ENCODE measurements at regions of chr10 and their contacts with region 1.

Region 1: DNA sequence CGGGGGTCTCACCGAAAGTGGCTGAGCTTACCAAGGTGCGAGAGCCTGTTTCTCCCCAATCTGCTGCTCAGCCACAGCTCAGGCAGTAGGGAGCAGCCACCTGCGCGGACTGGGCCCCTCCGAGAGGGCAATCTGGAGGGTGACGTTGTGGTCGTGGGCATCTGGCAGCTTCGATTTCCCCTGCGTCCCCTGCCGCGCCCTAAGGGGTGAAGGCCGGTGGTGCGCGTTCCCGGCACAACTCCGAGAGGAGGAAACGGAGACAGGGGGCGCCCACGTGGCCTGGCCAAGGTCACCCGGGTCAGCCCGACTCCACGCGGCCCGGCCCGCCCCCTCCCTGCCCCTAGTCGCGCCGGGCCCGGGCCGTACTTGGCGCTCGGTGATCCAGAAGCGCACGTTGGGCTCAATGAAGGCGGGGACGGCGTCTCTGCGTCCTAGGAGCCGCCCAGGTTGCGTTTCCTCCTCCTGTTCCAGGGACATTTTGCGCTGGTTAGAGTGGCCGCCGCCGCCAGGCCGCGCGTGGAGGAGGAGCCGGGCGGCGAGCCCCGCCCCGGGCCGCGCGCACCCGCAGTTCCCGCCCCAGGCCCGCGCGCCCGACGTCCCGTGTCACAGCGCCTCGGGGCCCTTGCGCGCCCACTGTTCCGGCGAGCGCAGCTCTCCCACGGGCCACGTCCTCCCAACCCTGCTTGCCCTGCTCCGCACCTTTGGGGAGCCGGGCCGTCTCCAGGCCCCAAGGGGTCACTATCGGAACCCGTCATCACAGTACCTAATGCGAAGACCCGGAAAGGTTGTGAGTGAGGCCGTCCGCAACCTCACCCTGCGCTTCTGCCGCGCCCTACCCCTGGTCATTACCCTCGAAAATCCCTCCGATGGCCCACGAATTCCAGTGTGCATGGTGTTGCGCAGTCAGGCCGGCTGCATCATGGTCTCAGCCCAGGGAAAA is at the start of gene SFXN4:
- DNase-seq: peak; percentile 72 to 87 (median 84)
- ATAC-seq: peak; percentile 98
- H3K4me3 ChIP-seq: peak within 1 kb of the TSS; percentile 95
- H3K4me3 Mint-ChIP-seq: peak within 1 kb of the TSS; percentile 89 to 95 (median 92)
- H3K27ac ChIP-seq: peak within 1 kb of the TSS; percentile 88
- H3K27ac Mint-ChIP-seq: peak within 1 kb of the TSS; percentile 85 to 98 (median 95)
- H3K4me1 ChIP-seq: peaks cover 12 to 15% of the 10 kb centered on the region in 2 donors
- H3K4me1 Mint-ChIP-seq: peaks cover 22 to 39% (median 32%) of the 10 kb centered on the region in 7 donors
- H3K27me3 ChIP-seq: no peaks in the 10 kb centered on the region
- H3K27me3 Mint-ChIP-seq: no peaks in the 10 kb centered on the region
- total RNA-seq, gene SFXN4: 11.8 to 28.1 (median 23.1) TPM

Region 2: GRCh38 chr10:119028900-119029612 is 136.4 kb before region 1 on chr10:
- CTCF ChIA-PET with region 1: no interaction called
- POLR2A ChIA-PET with region 1: no interaction called
- intact Hi-C with region 1: loop called in 1 of 2 experiments (anchors 1 kb)
- DNase-seq: peak; percentile 50 to 81 (median 60)
- ATAC-seq: peak; percentile 85
- H3K4me3 ChIP-seq: peak overlapping the region; percentile 43
- H3K4me3 Mint-ChIP-seq: peak overlapping the region; percentile 59 to 87 (median 78)
- H3K27ac ChIP-seq: no peak overlapping the region
- H3K27ac Mint-ChIP-seq: peak overlapping the region in 3 of 9 donors; percentile 17 to 65 (median 55)
- H3K4me1 ChIP-seq: no peaks in the 10 kb centered on the region
- H3K4me1 Mint-ChIP-seq: peaks cover 6 to 24% (median 10%) of the 10 kb centered on the region in 7 donors
- H3K27me3 ChIP-seq: no peaks in the 10 kb centered on the region
- H3K27me3 Mint-ChIP-seq: peaks cover 0 to 12% (median 0%) of the 10 kb centered on the region in 5 donors

Region 3: DNA sequence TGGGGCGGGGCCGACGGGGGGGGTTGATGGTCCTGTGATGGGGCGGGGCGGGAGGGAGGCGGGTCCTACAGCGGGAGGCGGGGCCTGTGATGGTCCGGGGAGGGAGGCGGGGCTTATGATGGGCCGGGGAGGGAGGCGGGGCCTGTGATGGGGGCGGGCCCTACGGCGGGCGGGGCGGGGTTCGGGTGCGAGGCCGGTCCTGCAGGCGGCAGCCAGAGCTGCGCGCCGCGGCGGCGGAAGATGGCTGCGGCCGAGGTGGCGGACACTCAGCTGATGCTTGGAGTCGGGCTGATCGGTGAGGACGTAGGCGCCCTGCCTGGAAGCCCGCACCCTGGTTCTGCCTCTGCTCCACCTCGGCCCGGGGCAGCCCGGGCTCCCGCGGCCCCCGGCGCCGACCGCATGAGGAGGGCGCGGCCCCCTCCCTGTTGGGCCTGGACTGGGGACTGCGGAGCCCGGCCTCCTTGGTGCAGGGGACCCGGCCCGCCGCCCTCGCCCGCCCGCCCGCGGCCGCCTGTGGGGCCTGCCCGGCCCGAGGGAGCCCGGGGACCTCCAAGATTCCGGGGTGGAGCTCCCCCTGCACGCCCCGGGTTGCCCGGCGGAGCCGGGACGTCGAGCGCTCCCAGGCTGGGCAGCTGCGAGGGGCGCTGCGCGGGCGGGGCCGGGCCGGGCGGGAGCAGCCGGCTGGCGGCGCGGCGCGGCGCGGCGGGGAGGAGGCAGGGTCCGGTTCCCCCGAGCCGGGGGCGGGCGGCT is 61.4 kb before region 1 on chr10 and contains the start of gene DENND10:
- CTCF ChIA-PET with region 1: no interaction called
- POLR2A ChIA-PET with region 1: interaction called, 3 read pairs
- intact Hi-C with region 1: loop called (anchors 1 kb)
- DNase-seq: peak; percentile 18 to 80 (median 51)
- ATAC-seq: peak; percentile 93
- H3K4me3 ChIP-seq: peak within 1 kb of the TSS; percentile 45
- H3K4me3 Mint-ChIP-seq: peak within 1 kb of the TSS; percentile 65 to 94 (median 85)
- H3K27ac ChIP-seq: peak within 1 kb of the TSS; percentile 69
- H3K27ac Mint-ChIP-seq: peak within 1 kb of the TSS; percentile 62 to 96 (median 84)
- H3K4me1 ChIP-seq: peaks cover 6 to 20% of the 10 kb centered on the region in 2 donors
- H3K4me1 Mint-ChIP-seq: peaks cover 5 to 35% (median 14%) of the 10 kb centered on the region in 7 donors
- H3K27me3 ChIP-seq: no peaks in the 10 kb centered on the region
- H3K27me3 Mint-ChIP-seq: no peaks in the 10 kb centered on the region
- total RNA-seq, gene DENND10: 22.1 to 41.7 (median 28.8) TPM

Region 4: DNA sequence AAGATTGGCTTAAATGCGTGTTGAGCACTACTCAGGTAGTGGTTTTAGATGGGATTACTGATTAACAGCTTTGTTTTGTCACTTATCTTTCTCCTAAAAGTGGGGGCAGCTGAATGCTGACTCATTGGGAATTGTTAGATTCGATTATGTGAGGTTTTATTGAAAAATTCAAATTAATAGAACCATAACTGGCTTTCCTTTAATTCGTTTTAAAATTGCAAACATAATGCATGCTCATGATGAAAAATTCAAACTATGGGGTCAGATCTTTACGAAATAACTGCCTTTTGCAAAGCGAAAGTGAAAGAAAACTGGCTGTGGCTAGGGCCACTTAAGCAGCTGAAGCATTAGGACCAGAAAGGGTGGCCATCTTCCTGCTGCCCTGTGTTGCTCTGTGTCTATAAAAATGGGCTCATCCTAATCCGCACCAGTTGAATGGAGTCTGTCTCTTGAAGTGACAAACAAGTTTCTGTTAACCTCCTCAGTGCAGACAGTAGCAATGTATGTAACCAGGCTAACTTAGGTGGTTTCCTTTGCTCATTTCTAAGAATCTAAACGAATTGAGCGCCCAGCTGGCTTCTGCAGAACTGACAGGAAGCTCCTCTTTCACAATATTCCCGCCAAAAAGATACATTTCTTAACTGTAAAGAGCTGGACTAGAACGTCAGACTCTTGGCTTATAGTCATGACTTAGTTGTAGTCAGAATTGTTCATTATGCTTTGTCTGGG is 33.8 kb before region 1 on chr10:
- CTCF ChIA-PET with region 1: no interaction called
- POLR2A ChIA-PET with region 1: interaction called, 5 read pairs
- intact Hi-C with region 1: loop called (anchors 1 to 2 kb)
- DNase-seq: peak in 8 of 9 donors; percentile 24 to 61 (median 40)
- ATAC-seq: peak; percentile 77
- H3K4me3 ChIP-seq: peak overlapping the region; percentile 73
- H3K4me3 Mint-ChIP-seq: peak overlapping the region; percentile 81 to 96 (median 91)
- H3K27ac ChIP-seq: peak overlapping the region; percentile 66
- H3K27ac Mint-ChIP-seq: peak overlapping the region; percentile 92 to 97 (median 95)
- H3K4me1 ChIP-seq: peaks cover 8 to 16% of the 10 kb centered on the region in 2 donors
- H3K4me1 Mint-ChIP-seq: peaks cover 16 to 59% (median 32%) of the 10 kb centered on the region in 7 donors
- H3K27me3 ChIP-seq: no peaks in the 10 kb centered on the region
- H3K27me3 Mint-ChIP-seq: no peaks in the 10 kb centered on the region

Region 5: DNA sequence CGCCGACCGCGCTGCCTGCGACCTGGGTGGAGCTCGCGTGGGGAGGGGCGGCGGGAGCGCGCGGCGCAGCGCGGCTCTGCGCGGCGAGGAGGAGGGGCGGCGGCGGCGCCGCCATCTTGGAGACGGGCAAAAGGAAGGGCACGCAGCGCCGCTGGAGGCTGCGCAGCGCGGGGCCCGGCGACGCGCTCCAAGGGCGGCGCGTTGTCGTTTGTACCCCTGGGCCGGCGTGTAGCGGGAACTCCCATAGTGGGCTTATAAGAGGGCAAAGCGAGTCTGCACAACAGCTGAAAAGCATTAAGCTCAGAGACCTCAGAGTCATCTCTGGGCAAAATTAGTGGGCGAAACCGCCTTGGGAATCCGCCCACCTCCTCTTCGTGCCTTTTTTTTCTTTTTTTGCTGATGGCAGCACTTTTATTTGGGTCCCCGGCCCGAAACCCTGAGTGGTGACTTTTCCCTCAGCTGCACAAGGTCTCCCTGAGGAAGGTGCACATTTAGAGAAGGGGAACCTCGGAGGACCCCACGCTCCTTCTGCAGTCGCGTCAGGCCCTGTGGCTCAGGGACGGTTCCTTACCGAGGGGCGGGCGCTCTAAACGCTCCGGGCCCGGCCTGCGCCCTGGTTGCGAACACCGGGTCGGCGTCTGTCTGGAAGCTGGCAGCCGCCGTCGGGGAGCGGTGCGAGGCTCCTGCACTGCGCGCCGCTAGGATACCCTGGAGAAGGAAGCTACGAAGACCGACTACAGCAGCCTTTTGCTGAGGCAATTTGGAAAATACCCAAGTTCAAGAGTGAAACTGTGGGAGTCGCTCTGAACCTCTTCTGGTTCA is 707.6 kb after region 1 on chr10:
- CTCF ChIA-PET with region 1: no interaction called
- POLR2A ChIA-PET with region 1: interaction called, 3 read pairs
- intact Hi-C with region 1: loop called in 1 of 2 experiments (anchors 2 kb)
- DNase-seq: peak; percentile 81 to 88 (median 86)
- ATAC-seq: peak; percentile 96
- H3K4me3 ChIP-seq: peak overlapping the region; percentile 97
- H3K4me3 Mint-ChIP-seq: peak overlapping the region; percentile 82 to 92 (median 89)
- H3K27ac ChIP-seq: peak overlapping the region; percentile 84
- H3K27ac Mint-ChIP-seq: peak overlapping the region; percentile 79 to 95 (median 92)
- H3K4me1 ChIP-seq: peaks cover 21 to 28% of the 10 kb centered on the region in 2 donors
- H3K4me1 Mint-ChIP-seq: peaks cover 23 to 46% (median 41%) of the 10 kb centered on the region in 7 donors
- H3K27me3 ChIP-seq: no peaks in the 10 kb centered on the region
- H3K27me3 Mint-ChIP-seq: peaks cover 0 to 6% (median 0%) of the 10 kb centered on the region in 5 donors

Measured in naive thymus-derived CD4-positive, alpha-beta T cell (primary cell).